PC-9 (cell line): ENCODE measurements at regions of chr1 and their contacts with region 1.

Region 1: GRCh38 chr1:33219881-33220661 is 36.2 kb upstream of the ZNF362 start:
- DNase-seq: peak; percentile 88 to 90
- H3K4me3 ChIP-seq: peak overlapping the region; percentile 25; the same call in 1 of the 2 replicates
- H3K27ac ChIP-seq: peak overlapping the region; percentile 99
- H3K4me1 ChIP-seq: peaks cover 48% of the 10 kb centered on the region
- H3K27me3 ChIP-seq: no peaks in the 10 kb centered on the region
- CTCF ChIP-seq: no peak

Region 2: DNA sequence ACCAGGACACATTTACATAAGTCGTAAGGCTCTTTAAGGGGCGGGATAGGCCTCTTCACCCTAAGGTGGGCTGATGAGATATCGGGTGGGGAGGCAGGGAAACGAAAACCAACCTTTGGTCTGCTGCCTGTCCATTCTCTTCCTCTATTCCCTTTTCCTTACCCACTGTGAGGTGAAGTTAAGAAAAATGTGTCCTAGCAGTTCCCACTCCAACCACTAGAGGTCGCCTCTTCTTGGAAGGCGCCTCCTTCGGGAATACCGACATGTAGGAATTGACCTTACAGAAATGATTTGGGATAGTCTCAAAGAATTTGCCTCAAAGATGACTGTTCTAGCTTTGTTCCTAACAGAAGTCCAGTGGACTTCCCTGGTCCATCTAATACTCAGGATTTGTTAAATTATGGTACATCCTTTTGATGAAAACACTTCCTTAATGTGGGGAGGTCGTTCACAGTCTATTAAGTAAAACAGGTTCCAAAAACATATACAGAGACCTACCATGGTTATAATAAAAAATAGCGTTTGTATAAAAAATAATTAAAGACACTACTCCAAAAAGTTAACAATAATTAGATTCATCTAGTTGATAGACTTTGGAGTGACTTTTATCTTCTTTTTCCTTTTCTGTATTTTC is 125.0 kb before region 1 on chr1:
- CTCF ChIA-PET with region 1: no interaction called
- POLR2A ChIA-PET with region 1: no interaction called
- intact Hi-C with region 1: loop called (anchors 1 kb)
- DNase-seq: peak; percentile 47 to 58
- H3K4me3 ChIP-seq: no peak overlapping the region
- H3K27ac ChIP-seq: no peak overlapping the region
- H3K4me1 ChIP-seq: peaks cover 19% of the 10 kb centered on the region
- H3K27me3 ChIP-seq: no peaks in the 10 kb centered on the region
- CTCF ChIP-seq: peak; percentile 98

Region 3: GRCh38 chr1:33127001-33127791 is 92.9 kb before region 1 on chr1:
- CTCF ChIA-PET with region 1: no interaction called
- POLR2A ChIA-PET with region 1: no interaction called
- intact Hi-C with region 1: loop called (anchors 1 kb)
- DNase-seq: peak; percentile 97 to 99
- H3K4me3 ChIP-seq: peak overlapping the region; percentile 85
- H3K27ac ChIP-seq: peak overlapping the region; percentile 77
- H3K4me1 ChIP-seq: peaks cover 28% of the 10 kb centered on the region
- H3K27me3 ChIP-seq: no peaks in the 10 kb centered on the region
- CTCF ChIP-seq: peak; percentile 88

Region 4: DNA sequence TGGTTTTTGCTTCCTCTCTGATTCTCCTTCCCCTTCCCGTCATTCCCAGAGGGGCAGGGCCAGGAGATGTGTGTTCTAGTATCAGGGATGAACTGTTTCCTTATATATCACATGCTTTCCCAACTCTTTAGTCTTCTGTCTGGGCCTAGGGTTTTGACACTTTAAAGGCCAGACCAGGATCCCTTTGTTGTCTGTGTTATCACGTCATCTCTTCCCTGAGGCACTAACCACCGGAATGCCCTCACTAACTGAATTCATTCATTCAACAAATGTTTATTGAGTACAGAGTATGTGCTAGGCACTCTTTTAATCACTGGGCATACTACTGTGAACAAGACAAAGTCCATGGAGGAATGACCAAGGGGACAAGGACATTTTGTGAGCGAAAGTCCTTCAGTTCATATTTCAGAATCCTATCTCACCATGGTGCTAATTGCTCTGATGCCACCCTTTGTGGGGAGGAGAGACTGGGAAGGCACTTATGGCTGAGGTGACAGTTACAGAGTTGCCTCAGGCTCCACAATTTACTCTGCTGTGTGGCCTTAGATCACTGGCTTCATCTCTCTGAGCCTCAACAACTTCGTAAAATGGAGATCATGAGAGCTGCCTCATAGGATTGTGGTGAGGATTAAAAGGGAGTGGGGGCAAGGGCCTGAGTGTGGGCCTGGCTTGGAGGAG is 24.2 kb after region 1 on chr1:
- CTCF ChIA-PET with region 1: no interaction called
- POLR2A ChIA-PET with region 1: no interaction called
- intact Hi-C with region 1: loop called (anchors 1 kb)
- DNase-seq: peak; percentile 57 to 90
- H3K4me3 ChIP-seq: no peak overlapping the region
- H3K27ac ChIP-seq: peak overlapping the region; percentile 62
- H3K4me1 ChIP-seq: peaks cover 31% of the 10 kb centered on the region
- H3K27me3 ChIP-seq: no peaks in the 10 kb centered on the region
- CTCF ChIP-seq: no peak

Region 5: DNA sequence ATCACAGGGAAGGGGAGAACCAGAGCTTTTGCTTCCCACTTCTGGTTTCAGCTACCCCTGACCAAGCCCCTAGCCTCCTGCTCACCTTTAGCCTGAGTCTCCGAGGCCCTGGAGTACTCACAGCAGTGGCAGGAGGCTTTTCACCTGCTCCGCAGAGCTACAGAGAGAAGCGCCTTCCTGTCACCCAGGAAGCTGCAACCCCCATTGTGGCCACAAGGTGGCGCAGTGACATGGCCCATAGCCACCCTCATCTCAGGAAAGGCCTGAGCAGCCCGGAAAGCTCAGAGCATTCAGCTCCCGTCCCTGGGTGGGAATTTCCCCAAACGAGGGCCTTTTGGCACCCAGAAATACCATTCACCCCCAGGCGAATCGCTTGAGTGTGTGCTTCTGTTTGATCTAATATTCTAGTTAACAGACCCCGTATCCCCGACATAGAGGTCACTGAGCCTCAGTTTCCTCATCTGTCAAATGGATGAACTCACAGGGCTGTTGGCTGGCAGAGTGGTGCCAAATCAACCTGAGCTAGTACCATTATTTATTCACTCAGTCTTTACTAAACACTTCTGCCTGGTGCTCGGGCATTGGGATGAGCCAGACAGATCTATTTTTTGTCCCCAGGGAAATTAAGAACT is 75.5 kb after region 1 on chr1:
- CTCF ChIA-PET with region 1: interaction called, 6 read pairs
- POLR2A ChIA-PET with region 1: no interaction called
- intact Hi-C with region 1: loop called (anchors 1 kb)
- DNase-seq: peak; percentile 61 to 82
- H3K4me3 ChIP-seq: no peak overlapping the region
- H3K27ac ChIP-seq: no peak overlapping the region
- H3K4me1 ChIP-seq: no peaks in the 10 kb centered on the region
- H3K27me3 ChIP-seq: no peaks in the 10 kb centered on the region
- CTCF ChIP-seq: peak; percentile 97

Region 6: DNA sequence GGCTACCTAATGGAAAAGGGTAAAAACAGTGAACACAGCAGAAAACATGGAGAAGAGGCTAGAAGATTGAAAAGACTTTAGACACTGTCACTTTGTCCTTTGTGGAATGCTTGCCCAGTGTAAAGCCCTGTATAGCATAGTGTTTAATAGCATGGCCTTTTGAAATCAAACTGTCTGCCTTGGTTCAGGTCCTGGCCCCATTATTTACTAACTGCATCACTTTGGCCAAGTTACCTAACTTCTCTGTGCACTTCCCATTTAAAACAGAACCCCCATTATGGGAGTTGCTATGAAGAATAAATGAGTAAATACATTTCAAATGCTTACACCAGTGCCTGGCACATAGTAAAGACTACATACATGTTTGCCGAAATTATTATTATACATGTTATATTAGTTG is 198.7 kb after region 1 on chr1:
- CTCF ChIA-PET with region 1: interaction called, 15 read pairs
- POLR2A ChIA-PET with region 1: no interaction called
- intact Hi-C with region 1: no loop called
- DNase-seq: no peak
- H3K4me3 ChIP-seq: no peak overlapping the region
- H3K27ac ChIP-seq: no peak overlapping the region
- H3K4me1 ChIP-seq: no peaks in the 10 kb centered on the region
- H3K27me3 ChIP-seq: no peaks in the 10 kb centered on the region
- CTCF ChIP-seq: no peak

Region 7: DNA sequence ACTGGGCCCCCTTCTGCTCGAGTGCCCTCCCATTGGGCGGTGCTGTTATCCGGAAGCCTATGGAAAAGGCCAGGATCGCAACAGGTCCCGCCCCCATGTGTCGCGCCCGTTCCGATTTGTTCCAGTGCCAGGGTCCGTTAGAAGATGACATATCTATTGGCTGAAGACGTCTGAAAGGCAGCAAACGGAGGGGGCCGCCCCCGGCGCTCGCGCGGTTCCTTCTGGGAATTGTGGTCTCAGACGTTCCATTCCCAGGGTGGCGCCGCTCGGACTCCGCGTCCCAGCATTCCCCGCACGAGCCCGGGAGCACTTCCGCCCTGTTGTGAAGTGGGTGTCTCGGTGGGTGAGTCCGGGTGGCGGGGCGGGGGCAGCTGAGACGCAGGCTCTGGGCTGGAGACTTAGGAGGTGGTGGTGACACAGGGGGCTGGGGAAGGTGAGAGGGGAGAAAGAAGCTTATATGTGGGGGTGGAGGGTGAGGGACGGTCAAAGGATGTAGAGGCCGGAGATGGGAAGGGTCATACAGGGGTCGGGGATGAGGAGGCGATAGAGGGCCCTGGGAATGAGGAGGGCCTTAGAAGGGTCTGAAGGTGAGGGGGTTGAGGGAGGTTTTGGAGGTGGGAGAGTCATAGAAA is 252.4 kb after region 1 on chr1 and contains the start of gene ZSCAN20:
- CTCF ChIA-PET with region 1: no interaction called
- POLR2A ChIA-PET with region 1: no interaction called
- intact Hi-C with region 1: loop called (anchors 1 kb)
- DNase-seq: peak; percentile 92 to 96
- H3K4me3 ChIP-seq: peak within 1 kb of the TSS; percentile 66
- H3K27ac ChIP-seq: no peak within 1 kb of the TSS
- H3K4me1 ChIP-seq: peaks cover 10% of the 10 kb centered on the region
- H3K27me3 ChIP-seq: no peaks in the 10 kb centered on the region
- CTCF ChIP-seq: no peak
- total RNA-seq, gene ZSCAN20: 6.0 and 6.4 TPM in 2 replicates